AG04450 (cell line): ENCODE measurements at regions of chr17 and their contacts with region 1.

Region 1: GRCh38 chr17:37239690-37240334 is 136.0 kb upstream of the C17orf78 start:
- DNase-seq: no peak
- H3K4me3 ChIP-seq: no peak overlapping the region
- H3K27ac ChIP-seq: no peak overlapping the region
- H3K27me3 ChIP-seq: no peaks in the 10 kb centered on the region
- CTCF ChIP-seq: peak; percentile 80

Region 2: DNA sequence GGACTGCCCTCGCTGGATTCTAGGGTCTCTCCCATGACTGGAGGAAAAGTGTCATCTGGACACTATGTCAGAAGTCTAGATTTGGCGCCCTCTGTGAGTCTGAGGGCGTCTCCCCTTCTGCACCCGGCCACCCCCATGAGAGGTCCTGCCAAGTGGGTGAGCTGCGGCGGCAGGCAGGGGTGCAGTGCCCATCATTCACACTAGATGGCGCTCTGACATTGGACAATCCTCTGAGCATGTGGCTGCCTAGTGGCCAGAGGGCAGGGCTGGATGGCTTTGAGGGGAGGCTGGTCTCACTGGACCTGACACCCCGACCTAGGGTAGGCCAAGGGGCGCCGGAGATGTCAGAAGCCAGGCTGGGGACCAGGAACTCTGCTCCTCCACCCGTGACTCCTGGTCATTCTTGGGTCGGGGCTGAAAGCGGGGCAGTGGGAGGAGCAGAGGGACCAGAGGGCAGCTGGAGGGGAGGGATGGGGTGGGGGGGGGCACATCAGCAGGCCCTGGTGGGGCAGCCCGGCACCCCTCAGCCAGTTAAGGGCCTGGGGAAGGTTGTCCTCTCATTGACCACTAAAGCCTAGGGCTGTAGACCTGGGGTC is 610.5 kb before region 1 on chr17:
- CTCF ChIA-PET with region 1: interaction called, 26 read pairs
- POLR2A ChIA-PET with region 1: no interaction called
- DNase-seq: peak; percentile 33
- H3K4me3 ChIP-seq: no peak overlapping the region
- H3K27ac ChIP-seq: no peak overlapping the region
- H3K27me3 ChIP-seq: peaks cover 31% of the 10 kb centered on the region
- CTCF ChIP-seq: peak; percentile 98

Region 3: DNA sequence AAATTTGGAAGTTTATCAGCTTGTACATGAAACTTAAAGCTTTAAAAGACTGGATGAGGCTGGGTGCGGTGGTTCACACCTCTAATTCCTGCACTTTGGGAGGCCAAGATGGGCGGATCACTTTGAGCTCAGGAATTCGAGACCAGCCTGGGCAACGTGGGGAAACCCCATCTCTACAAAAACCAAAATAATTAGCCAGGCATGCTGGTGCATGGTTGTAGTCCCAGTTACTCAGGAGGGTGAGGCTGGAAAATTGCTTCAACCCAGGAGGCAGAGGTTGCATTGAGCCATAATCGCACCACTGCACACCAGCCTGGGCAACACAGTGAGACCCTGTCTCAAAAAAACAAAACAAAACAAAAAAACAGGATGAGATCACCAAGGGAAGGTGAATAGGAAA is 81.5 kb before region 1 on chr17:
- CTCF ChIA-PET with region 1: no interaction called
- POLR2A ChIA-PET with region 1: no interaction called
- DNase-seq: no peak
- H3K4me3 ChIP-seq: no peak overlapping the region
- H3K27ac ChIP-seq: no peak overlapping the region
- H3K27me3 ChIP-seq: no peaks in the 10 kb centered on the region
- CTCF ChIP-seq: no peak

Region 4: DNA sequence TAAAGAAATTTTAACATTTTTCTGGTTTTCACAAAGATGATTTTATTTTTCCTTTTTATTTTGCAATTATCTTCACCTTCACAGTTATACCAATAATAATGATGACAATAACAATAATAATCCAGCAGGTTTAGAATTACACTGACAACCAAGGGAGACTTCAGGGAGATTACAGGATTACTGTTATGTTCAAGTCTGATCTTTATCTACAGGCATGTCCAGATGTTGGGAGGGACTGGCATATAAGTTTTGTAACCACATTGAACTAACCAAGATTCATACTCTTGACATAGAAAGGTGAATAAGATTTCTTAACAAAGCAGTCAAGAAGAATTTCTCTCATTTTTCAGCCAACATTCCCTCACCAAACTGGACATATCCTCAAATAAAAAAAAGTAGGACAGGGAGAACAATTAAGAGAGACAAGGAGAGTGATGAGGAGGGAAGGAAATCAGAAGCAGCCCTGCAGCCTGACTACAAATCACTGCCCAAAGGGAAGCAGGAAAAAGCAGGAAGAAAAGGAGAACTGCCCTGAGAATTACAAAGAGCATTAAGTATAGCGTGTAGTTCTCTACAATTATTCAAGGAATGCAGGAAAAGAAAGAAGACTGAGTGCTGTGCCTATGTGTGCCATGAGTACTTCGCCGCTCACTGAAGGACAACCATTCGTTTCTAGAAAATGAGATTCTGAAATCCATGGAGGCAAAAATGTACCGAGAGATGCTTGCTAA is 19.8 kb before region 1 on chr17:
- CTCF ChIA-PET with region 1: interaction called, 31 read pairs
- POLR2A ChIA-PET with region 1: no interaction called
- DNase-seq: no peak
- H3K4me3 ChIP-seq: no peak overlapping the region
- H3K27ac ChIP-seq: no peak overlapping the region
- H3K27me3 ChIP-seq: no peaks in the 10 kb centered on the region
- CTCF ChIP-seq: no peak

Region 5: GRCh38 chr17:37225458-37225857 is 14.4 kb before region 1 on chr17:
- CTCF ChIA-PET with region 1: interaction called, 31 read pairs
- POLR2A ChIA-PET with region 1: no interaction called
- DNase-seq: no peak
- H3K4me3 ChIP-seq: no peak overlapping the region
- H3K27ac ChIP-seq: no peak overlapping the region
- H3K27me3 ChIP-seq: no peaks in the 10 kb centered on the region
- CTCF ChIP-seq: no peak

Region 6: DNA sequence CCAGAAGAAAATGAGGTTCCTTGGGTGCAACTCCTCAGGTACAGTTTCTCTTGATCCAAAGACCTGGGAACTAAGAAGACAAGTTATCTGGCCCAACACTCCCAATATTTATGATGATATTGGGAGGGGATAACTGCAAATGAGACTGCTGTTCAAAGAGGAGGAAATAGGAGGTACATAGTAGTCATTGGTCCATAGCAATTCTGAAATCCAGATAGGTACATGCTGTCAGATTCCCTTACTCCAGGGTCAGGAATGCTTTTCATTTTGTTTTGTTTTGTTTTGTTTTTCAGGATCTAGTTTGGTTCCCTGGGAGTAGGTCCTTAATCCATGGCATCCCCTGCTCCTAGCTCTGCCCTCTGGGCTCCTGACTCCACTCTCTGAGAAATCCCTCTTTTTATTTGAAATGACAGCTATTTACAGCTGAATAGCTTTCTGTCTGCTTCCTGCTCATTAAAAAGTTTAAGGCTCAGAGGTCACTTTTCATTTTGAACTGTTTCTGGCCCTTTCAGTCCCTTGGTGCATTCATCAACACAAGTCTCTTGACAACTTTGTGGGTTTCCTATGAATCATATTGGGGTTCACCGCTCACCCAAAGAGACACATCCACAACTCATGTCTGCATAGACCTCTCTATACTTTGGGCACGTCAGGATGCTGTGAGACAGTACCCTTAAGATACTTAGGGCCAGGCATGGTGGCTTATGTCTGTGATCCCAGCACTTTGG is 25.8 kb after region 1 on chr17:
- CTCF ChIA-PET with region 1: interaction called, 14 read pairs
- POLR2A ChIA-PET with region 1: no interaction called
- DNase-seq: no peak
- H3K4me3 ChIP-seq: no peak overlapping the region
- H3K27ac ChIP-seq: no peak overlapping the region
- H3K27me3 ChIP-seq: no peaks in the 10 kb centered on the region
- CTCF ChIP-seq: no peak